ENCODE measurements at regions of chr7 and their contacts with region 1.

Region 1: DNA sequence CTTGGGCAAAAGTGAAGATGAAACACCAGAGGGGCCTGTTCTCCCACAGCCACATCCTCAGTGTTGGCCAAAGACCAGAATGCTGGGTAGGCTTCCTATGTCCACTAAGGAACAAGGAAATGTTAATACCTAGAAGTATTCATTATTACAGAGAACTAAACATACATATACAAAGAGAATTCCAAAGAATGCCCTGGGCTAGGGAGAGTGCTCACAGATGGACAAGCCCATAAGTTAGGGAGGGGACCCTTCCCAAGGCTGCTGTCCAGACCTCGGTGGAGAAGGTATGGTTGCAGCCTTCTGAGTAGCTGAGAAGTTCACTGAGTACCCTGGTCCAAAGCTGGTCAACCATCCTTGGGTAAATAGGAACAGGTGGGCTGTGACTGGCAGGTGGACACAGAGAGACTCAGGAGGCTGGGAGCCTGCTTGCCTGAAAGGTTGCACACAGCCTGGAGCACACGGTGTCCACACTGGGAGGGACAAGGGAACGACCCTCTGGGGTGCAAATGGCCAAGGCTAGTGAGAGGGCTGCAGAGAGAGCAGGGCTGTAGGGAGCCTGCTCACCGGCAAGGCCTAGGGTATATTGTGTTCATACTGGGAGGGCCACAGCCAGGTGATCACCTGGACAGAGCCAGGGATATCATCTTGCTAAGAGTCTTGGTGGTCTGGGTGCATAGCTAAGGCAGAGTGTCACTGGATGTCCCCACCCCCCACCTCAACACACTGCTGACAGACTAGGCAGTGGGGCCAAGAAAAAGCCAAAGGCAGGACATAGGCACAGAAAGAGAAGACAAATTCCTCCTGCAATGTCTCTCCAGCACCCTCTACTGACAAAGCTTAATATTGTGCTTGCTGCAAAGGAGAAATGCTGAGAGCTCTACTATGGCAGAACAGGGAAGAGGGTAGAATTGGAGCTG is 40.3 kb downstream of the CPVL start:
- DNase-seq: no peak
- H3K4me3 ChIP-seq: no peak overlapping the region
- H3K27ac ChIP-seq: no peak overlapping the region
- H3K4me1 ChIP-seq: peaks cover 5% of the 10 kb centered on the region
- H3K27me3 ChIP-seq: no peaks in the 10 kb centered on the region
- CTCF ChIP-seq: peak; percentile 29 to 87 (median 74)
- POLR2A ChIP-seq: no peak

Region 2: DNA sequence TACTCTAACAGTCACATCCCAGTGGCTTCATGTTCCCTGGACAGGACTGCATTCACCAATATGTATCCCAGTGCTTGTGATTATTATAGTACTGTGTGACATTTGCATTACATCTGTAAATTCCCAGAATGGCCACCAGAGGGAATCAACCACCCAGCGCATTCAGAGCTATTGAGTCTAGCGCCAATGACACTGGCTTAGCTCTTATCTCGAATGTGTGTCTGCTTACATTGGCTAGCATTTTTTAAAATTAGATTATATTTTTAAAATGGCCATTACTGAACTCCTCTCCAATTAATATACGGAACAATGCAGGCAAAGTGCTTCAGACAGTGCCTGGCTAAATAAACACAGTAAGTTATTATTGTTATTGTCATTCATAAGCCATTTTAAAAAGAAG is 184.2 kb before region 1 on chr7:
- intact Hi-C with region 1: loop called (anchors 5 kb)
- DNase-seq: no peak
- H3K4me3 ChIP-seq: no peak overlapping the region
- H3K27ac ChIP-seq: no peak overlapping the region
- H3K4me1 ChIP-seq: no peaks in the 10 kb centered on the region
- H3K27me3 ChIP-seq: no peaks in the 10 kb centered on the region
- CTCF ChIP-seq: peak; percentile 77 to 96 (median 90)
- POLR2A ChIP-seq: no peak

Region 3: DNA sequence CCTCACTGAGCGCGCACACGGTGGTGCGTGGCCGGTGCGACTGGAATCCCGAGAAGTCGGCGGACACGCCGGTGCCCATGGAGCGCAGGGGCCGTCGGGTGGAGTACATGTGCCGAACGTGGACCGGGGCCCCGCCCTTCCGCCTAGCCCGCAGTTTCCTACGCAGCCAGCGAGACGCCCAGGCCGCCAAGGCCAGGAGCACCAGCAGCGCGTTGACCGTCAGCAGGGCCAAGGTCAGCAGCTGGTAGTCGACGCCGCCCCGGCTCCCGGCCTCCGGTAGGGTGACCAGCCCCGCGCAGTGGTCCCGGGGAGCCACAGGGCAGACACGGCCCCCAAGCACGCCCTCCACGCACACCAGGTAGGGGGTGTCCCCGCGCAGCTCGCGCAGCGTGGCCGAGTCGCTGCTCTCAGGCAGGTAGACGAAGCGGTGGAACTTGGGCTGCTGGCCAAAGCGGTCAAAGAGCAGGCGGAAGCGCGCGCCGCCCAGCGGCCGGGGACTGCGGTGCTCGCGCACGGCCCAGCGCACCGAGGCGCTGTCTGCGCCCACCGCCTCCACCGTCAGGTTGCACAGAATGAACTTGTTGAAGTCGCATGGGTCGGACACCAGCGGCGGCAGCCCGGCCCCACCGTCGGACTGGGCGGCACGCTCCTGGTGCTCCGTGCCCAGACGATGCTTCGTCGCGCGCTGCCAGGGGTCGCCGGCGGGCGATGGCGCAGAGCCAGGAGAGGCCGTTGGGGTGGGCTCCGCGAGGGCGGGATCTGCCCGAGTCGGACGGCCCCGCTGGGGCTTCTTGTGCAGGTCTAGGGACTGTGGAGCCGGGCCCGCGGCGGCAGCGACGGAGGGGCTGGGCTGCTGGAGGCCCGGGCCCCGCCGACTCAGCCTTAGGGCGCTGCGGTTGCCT is 150.0 kb before region 1 on chr7:
- intact Hi-C with region 1: loop called (anchors 10 kb)
- DNase-seq: peak in 1 of 2 donors; percentile 86
- H3K4me3 ChIP-seq: peak overlapping the region; percentile 53 to 58
- H3K27ac ChIP-seq: peak overlapping the region; percentile 84
- H3K4me1 ChIP-seq: peaks cover 56% of the 10 kb centered on the region
- H3K27me3 ChIP-seq: no peaks in the 10 kb centered on the region
- CTCF ChIP-seq: peak; percentile 1 to 57 (median 49)
- POLR2A ChIP-seq: no peak